Transverse colon (tissue), 4 donors: ENCODE measurements at regions of chr15 and their contacts with region 1.

Region 1: GRCh38 chr15:101499863-101500713 is 10.6 kb upstream of the PCSK6 start:
- DNase-seq: peak; percentile 68
- H3K4me3 ChIP-seq: no peak overlapping the region
- H3K27ac ChIP-seq: no peak overlapping the region
- H3K4me1 ChIP-seq: peaks cover 20 to 44% (median 31%) of the 10 kb centered on the region in 4 donors
- H3K27me3 ChIP-seq: peaks cover 16% of the 10 kb centered on the region
- CTCF ChIP-seq: no peak
- EP300 ChIP-seq: no peak
- POLR2A ChIP-seq: no peak

Region 2: GRCh38 chr15:101305820-101306255 is 194.2 kb before region 1 on chr15:
- in situ Hi-C with region 1: loop called in 1 of 4 experiments (anchors 25 kb)
- intact Hi-C with region 1: loop called (anchors 5 kb)
- DNase-seq: peak; percentile 3
- H3K4me3 ChIP-seq: no peak overlapping the region
- H3K27ac ChIP-seq: no peak overlapping the region
- H3K4me1 ChIP-seq: no peaks in the 10 kb centered on the region
- H3K27me3 ChIP-seq: no peaks in the 10 kb centered on the region
- CTCF ChIP-seq: no peak
- EP300 ChIP-seq: no peak
- POLR2A ChIP-seq: no peak

Region 3: DNA sequence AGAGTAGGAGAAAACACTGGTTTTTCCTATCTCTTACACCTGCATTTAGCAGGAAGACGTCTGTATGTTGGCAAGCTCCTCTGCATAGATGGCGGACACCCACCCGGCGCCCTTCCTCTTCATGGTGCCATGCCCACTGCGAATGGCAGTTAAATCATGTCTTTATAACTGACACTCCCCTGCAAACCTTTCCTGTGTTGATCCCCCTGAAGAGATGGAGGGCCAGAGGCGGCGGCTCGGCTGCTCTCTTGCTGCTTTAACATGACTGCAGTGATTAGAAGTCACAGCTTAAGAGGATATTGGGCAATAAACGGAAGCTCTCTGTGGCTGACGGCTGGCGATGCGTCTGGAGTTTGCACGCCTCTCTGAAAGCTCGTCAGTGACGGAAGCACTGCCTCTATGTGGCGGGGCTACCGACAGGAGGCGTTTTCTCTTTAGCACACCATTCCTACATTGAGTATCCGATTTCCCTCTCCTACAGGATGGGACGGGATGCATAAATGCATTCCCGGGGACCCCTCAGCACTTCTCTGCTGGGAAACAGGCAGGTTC is 179.5 kb before region 1 on chr15:
- in situ Hi-C with region 1: loop called in 1 of 4 experiments (anchors 25 kb)
- intact Hi-C with region 1: no loop called
- DNase-seq: peak; percentile 52
- H3K4me3 ChIP-seq: no peak overlapping the region
- H3K27ac ChIP-seq: peak overlapping the region in 1 of 4 donors; percentile 15
- H3K4me1 ChIP-seq: peaks cover 0 to 3% (median 0%) of the 10 kb centered on the region in 4 donors
- H3K27me3 ChIP-seq: no peaks in the 10 kb centered on the region
- CTCF ChIP-seq: peak in 3 of 5 experiments; percentile 7 to 19 (median 11)
- EP300 ChIP-seq: no peak
- POLR2A ChIP-seq: no peak